ENCODE measurements at regions of chr1 and their contacts with region 1.

Region 1: GRCh38 chr1:168082008-168082876 is 54.5 kb downstream of the GPR161 start:
- DNase-seq: peak; percentile 60 to 88
- H3K4me3 ChIP-seq: no peak overlapping the region
- H3K27ac ChIP-seq: no peak overlapping the region
- H3K4me1 ChIP-seq: 0 out of 7 replicates have a peak, but pooled peaks cover 0 to 2% (median 0%) of the 10 kb centered on the region in 4 experiments
- H3K27me3 ChIP-seq: no peaks in the 10 kb centered on the region
- CTCF ChIP-seq: peak; percentile 79 to 98 (median 94)
- EP300 ChIP-seq: no peak
- POLR2A ChIP-seq: 0 out of 3 replicates have a peak, but pooled peaks of 1 of the 2 experiments have one; percentile 20
- RAD21 ChIP-seq: peak; percentile 82

Region 2: GRCh38 chr1:168054117-168054516 is 28.1 kb before region 1 on chr1:
- CTCF ChIA-PET with region 1: interaction called, 14 read pairs
- POLR2A ChIA-PET with region 1: no interaction called
- DNase-seq: no peak
- H3K4me3 ChIP-seq: no peak overlapping the region
- H3K27ac ChIP-seq: no peak overlapping the region
- H3K4me1 ChIP-seq: no peaks in the 10 kb centered on the region
- H3K27me3 ChIP-seq: no peaks in the 10 kb centered on the region
- CTCF ChIP-seq: no peak
- EP300 ChIP-seq: no peak
- POLR2A ChIP-seq: no peak
- RAD21 ChIP-seq: no peak

Region 3: DNA sequence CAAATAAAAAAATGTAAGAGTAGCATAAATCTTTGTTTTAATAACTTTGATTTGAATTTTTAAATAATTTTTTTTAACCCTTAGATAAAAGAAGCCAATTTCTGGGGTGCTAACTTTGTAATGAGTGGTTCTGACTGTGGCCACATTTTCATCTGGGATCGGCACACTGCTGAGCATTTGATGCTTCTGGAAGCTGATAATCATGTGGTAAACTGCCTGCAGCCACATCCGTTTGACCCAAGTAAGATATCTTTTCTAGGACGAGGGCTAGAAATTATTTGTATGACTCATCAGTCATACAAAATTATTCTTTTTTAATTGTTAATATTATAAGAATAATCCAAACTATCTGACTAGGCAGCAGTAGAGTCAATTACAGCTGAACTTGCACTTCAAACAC is 16.7 kb before region 1 on chr1:
- CTCF ChIA-PET with region 1: interaction called, 16 read pairs
- POLR2A ChIA-PET with region 1: interaction called, 6 read pairs
- DNase-seq: no peak
- H3K4me3 ChIP-seq: no peak overlapping the region
- H3K27ac ChIP-seq: no peak overlapping the region
- H3K4me1 ChIP-seq: no peaks in the 10 kb centered on the region
- H3K27me3 ChIP-seq: no peaks in the 10 kb centered on the region
- CTCF ChIP-seq: no peak
- EP300 ChIP-seq: no peak
- POLR2A ChIP-seq: no peak
- RAD21 ChIP-seq: no peak

Region 4: GRCh38 chr1:168092566-168093355 is 10.5 kb after region 1 on chr1:
- CTCF ChIA-PET with region 1: interaction called, 75 read pairs
- POLR2A ChIA-PET with region 1: no interaction called
- DNase-seq: no peak
- H3K4me3 ChIP-seq: no peak overlapping the region
- H3K27ac ChIP-seq: no peak overlapping the region
- H3K4me1 ChIP-seq: peaks cover 0 to 3% (median 0%) of the 10 kb centered on the region in 4 experiments; a peak in 1 of 7 replicates
- H3K27me3 ChIP-seq: no peaks in the 10 kb centered on the region
- CTCF ChIP-seq: peak; percentile 55 to 67 (median 57)
- EP300 ChIP-seq: no peak
- POLR2A ChIP-seq: no peak
- RAD21 ChIP-seq: peak; percentile 73 to 77

Region 5: DNA sequence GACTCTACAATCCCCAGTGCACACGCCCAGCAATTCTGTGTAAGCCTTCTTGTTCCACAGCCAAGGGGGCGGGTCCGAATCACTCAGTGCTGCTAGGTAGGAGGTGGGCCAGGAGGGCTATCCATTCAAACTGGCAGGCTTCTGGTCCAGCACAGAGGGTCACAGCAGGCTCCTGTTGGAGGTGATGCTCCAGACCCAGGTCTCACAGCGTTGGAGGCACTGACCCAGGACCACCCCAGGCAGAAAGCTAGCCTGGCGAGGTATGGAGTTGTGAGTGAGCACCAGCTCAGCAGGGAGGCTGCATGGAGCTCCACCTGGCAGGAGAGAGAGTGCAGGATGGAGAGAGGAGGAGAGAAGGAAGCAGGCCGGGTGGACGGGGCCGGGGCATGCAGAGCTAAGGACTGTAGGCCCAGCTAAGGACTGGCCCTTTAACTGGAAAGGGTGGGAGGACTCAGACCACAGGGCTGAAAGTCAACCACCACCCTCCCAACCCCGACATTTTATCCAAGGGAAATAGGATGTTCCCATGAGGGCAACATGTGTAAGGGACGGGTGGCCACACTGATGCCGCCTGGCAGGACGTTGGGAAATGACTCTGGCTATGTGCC is 15.8 kb after region 1 on chr1:
- CTCF ChIA-PET with region 1: interaction called, 76 read pairs
- POLR2A ChIA-PET with region 1: no interaction called
- DNase-seq: no peak
- H3K4me3 ChIP-seq: no peak overlapping the region
- H3K27ac ChIP-seq: no peak overlapping the region
- H3K4me1 ChIP-seq: no peaks in the 10 kb centered on the region
- H3K27me3 ChIP-seq: no peaks in the 10 kb centered on the region
- CTCF ChIP-seq: no peak
- EP300 ChIP-seq: no peak
- POLR2A ChIP-seq: no peak
- RAD21 ChIP-seq: no peak

Region 6: DNA sequence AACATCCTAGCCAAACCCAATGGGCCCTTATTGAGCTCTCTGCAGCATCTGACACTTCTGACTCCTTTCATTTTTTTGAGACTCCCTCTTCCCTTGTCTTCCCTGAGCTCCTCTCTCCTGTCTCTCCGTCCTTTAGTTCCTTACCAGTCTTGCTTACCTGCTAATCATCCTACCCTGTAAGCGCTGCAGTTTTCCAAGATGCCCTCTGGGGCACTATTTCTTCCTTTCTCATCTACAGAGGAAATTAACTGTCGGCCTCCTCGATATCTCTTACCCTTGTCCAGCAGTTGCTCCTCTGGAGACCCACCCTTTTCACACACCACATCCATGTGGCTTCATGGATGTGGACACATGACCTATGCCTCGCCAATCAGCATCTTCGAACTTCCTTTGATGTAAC is 47.7 kb after region 1 on chr1:
- CTCF ChIA-PET with region 1: interaction called, 18 read pairs
- POLR2A ChIA-PET with region 1: no interaction called
- DNase-seq: no peak
- H3K4me3 ChIP-seq: no peak overlapping the region
- H3K27ac ChIP-seq: no peak overlapping the region
- H3K4me1 ChIP-seq: peaks cover 0 to 2% (median 0%) of the 10 kb centered on the region in 4 experiments; a peak in 2 of 7 replicates
- H3K27me3 ChIP-seq: peaks cover 0 to 4% (median 2%) of the 10 kb centered on the region in 4 experiments; a peak in 4 of 7 replicates
- CTCF ChIP-seq: peak in 2 of 3 experiments; percentile 24 to 31; a peak in 2 of 4 replicates
- EP300 ChIP-seq: no peak
- POLR2A ChIP-seq: no peak
- RAD21 ChIP-seq: no peak; a peak in 1 of 4 replicates